Caco-2 (cell line): ENCODE measurements at regions of chr17 and their contacts with region 1.

Region 1: DNA sequence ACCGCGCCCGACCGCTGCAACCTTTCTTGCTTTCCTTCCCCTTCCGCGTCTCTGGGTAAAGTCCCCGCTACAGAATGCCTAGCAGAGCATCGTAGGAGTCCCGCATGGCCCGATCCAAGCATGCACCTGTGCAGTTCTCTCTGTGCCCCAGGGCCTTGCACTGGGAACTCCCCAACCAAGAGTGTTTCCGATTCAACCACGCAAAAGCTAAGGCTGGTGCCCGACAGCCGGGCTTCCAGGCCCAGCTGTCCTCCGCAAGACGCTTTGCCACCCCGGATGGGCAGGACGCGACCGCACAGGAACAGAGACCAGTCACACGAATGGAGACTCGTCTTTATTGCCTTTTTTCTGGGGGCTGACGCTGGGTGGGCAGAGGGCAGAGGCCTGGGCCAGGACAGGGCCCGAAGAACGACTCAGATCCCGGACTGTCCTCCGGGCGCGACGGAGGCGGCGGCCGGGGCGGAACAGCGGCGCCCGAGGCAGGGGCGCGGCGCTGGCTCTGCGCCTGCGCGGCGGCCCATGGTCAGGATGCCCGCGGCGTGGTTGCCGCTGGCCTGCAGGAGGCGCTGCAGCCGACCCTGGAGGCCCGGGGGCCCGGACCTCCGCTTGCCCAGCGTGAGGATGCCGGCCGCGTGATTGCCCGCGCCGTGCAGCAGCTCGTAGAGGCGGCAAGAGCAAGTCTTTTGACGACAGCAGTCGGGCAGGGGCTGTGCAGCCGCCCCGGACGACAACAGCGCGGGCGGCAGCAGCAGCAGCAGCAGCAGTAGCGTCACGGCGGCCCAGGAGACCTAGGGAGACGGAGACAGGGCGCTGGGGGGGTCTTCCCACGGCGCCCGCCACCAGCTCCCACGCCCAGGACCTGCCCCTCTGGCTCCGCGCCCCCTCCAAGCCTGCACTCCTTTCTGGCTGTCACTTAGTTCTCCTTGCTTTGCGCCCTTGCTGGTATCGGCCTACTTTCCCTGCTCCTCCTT is 1.2 kb downstream of the HCRT start:
- DNase-seq: peak; percentile 67 to 89
- H3K4me3 ChIP-seq: peak overlapping the region; percentile 61
- H3K4me3 Mint-ChIP-seq: peak overlapping the region; percentile 77
- H3K27ac Mint-ChIP-seq: peak overlapping the region; percentile 84
- H3K4me1 ChIP-seq: peaks cover 20% of the 10 kb centered on the region
- H3K4me1 Mint-ChIP-seq: peaks cover 20% of the 10 kb centered on the region
- H3K27me3 ChIP-seq: no peaks in the 10 kb centered on the region; the same call in 1 of the 2 replicates
- H3K27me3 Mint-ChIP-seq: peaks cover 10% of the 10 kb centered on the region
- CTCF ChIP-seq: peak; percentile 74 to 81

Region 2: DNA sequence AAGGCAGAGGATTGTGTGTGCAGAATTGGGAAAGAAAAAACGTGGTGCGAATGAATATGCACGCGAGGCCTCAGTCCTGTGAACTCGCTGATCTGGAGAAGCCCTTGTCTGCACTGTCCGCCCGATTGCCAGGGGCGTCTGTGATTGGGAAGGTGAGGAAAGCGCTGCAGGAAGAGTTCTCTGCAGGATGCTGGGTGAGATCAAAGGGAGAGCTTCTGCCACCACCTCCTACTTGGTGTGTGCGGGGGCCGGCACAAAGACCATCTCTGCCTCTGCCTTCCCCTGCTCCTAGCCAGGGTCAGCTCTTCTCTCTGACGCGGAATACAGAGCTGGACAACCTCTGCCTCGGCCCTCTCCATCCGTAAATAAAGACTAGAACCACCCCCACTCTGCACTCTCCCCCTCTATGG is 28.4 kb before region 1 on chr17:
- CTCF ChIA-PET with region 1: interaction called, 9 read pairs
- POLR2A ChIA-PET with region 1: no interaction called
- intact Hi-C with region 1: loop called (anchors 1 kb)
- DNase-seq: no peak
- H3K4me3 ChIP-seq: no peak overlapping the region
- H3K4me3 Mint-ChIP-seq: peak overlapping the region; percentile 92
- H3K27ac Mint-ChIP-seq: peak overlapping the region; percentile 47
- H3K4me1 ChIP-seq: peaks cover 9% of the 10 kb centered on the region
- H3K4me1 Mint-ChIP-seq: peaks cover 7% of the 10 kb centered on the region
- H3K27me3 ChIP-seq: no peaks in the 10 kb centered on the region
- H3K27me3 Mint-ChIP-seq: no peaks in the 10 kb centered on the region
- CTCF ChIP-seq: no peak

Region 3: GRCh38 chr17:42193969-42194899 is 10.2 kb after region 1 on chr17 and contains the start of gene GHDC:
- CTCF ChIA-PET with region 1: interaction called, 15 read pairs
- POLR2A ChIA-PET with region 1: no interaction called
- intact Hi-C with region 1: no loop called
- DNase-seq: peak; percentile 81 to 84
- H3K4me3 ChIP-seq: peak within 1 kb of the TSS; percentile 60
- H3K4me3 Mint-ChIP-seq: peak within 1 kb of the TSS; percentile 84
- H3K27ac Mint-ChIP-seq: peak within 1 kb of the TSS; percentile 82
- H3K4me1 ChIP-seq: peaks cover 11% of the 10 kb centered on the region
- H3K4me1 Mint-ChIP-seq: peaks cover 16% of the 10 kb centered on the region
- H3K27me3 ChIP-seq: no peaks in the 10 kb centered on the region
- H3K27me3 Mint-ChIP-seq: no peaks in the 10 kb centered on the region
- CTCF ChIP-seq: no peak
- total RNA-seq, gene GHDC: 17.7 and 21.4 TPM in 2 replicates

Region 4: DNA sequence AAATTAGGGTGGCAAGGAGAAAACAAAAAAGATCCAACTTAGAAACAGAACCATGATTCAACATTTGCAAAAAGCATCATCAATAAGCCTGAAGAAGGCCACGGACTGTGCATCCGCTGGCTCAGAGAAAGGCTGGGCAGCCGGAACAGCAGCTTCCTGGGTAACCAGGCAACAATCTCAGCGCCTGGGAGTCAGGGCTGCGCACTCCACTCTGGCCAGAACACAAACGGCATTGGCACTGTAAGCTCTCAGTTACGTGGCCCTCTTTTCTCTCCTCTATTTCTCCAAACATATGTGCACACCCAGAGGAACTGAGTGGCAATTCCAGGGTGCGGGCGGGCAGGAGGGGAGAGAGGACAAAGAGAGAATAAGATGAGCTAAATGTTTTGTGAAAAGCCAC is 16.7 kb after region 1 on chr17:
- CTCF ChIA-PET with region 1: interaction called, 10 read pairs
- POLR2A ChIA-PET with region 1: no interaction called
- intact Hi-C with region 1: no loop called
- DNase-seq: no peak
- H3K4me3 ChIP-seq: no peak overlapping the region
- H3K4me3 Mint-ChIP-seq: no peak overlapping the region
- H3K27ac Mint-ChIP-seq: peak overlapping the region; percentile 1
- H3K4me1 ChIP-seq: peaks cover 11% of the 10 kb centered on the region
- H3K4me1 Mint-ChIP-seq: peaks cover 13% of the 10 kb centered on the region
- H3K27me3 ChIP-seq: no peaks in the 10 kb centered on the region
- H3K27me3 Mint-ChIP-seq: no peaks in the 10 kb centered on the region
- CTCF ChIP-seq: no peak